ENCODE measurements at regions of chr12 and their contacts with region 1.

Region 1: GRCh38 chr12:21699851-21700250 is 42.2 kb upstream of the LDHB start:
- DNase-seq: no peak
- H3K4me3 ChIP-seq: no peak overlapping the region
- H3K27ac ChIP-seq: no peak overlapping the region
- H3K4me1 ChIP-seq: peaks cover 18% of the 10 kb centered on the region; the same call in 1 of the 2 replicates
- H3K27me3 ChIP-seq: no peaks in the 10 kb centered on the region

Region 2: DNA sequence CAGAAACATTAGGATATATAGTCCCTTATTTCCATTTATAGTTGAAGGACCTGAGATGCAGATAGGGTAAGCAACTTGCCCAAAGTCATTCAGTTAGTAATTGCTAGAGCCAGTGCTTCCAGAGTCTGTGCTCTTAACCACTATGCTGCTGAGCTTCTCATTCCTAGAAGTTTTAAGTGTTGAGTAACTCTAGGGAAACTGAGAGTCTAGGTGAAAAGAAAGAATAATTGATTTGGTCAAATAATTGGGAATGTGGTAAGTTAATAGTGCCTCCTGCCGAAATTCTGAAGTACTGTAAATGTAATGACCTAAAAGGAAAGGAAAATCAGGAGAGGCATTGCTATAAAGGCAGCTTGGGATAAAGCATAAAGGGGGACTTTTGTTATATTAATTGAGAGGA is 248.3 kb before region 1 on chr12:
- in situ Hi-C with region 1: no loop called
- DNase-seq: peak; percentile 14
- H3K4me3 ChIP-seq: no peak overlapping the region
- H3K27ac ChIP-seq: no peak overlapping the region
- H3K4me1 ChIP-seq: peaks cover 7% of the 10 kb centered on the region; the same call in 1 of the 2 replicates
- H3K27me3 ChIP-seq: no peaks in the 10 kb centered on the region

Region 3: DNA sequence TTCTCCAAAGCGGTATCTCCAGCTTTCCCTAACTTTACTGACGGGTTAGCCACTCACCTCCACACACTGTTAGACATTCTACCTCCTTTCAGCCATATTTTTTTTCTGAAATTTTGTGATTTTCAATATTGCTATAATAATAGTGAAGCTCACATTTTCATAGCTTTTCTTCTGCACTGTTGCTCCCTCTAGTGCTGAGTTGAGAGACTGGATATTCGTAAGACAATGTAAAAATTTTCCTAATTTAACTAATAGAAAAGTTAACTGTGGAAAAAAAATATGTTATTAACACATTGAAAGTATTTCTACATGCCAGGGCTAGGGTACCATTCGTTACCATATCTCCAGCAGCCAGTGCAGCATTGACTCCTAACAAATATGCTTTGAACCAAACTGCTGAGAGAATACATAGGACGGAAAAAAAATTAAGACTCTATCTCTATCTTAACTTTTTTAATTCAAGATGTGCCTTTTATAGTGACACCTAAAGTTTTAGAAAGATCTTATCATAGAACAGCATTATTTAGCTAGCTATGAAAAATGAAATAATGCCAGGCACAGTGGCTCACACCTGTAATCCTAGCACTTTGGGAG is 290.1 kb after region 1 on chr12:
- in situ Hi-C with region 1: loop called (anchors 10 kb)
- DNase-seq: peak; percentile 72
- H3K4me3 ChIP-seq: no peak overlapping the region
- H3K27ac ChIP-seq: no peak overlapping the region
- H3K4me1 ChIP-seq: no peaks in the 10 kb centered on the region
- H3K27me3 ChIP-seq: no peaks in the 10 kb centered on the region